ENCODE measurements at regions of chr5 and their contacts with region 1.

Region 1: DNA sequence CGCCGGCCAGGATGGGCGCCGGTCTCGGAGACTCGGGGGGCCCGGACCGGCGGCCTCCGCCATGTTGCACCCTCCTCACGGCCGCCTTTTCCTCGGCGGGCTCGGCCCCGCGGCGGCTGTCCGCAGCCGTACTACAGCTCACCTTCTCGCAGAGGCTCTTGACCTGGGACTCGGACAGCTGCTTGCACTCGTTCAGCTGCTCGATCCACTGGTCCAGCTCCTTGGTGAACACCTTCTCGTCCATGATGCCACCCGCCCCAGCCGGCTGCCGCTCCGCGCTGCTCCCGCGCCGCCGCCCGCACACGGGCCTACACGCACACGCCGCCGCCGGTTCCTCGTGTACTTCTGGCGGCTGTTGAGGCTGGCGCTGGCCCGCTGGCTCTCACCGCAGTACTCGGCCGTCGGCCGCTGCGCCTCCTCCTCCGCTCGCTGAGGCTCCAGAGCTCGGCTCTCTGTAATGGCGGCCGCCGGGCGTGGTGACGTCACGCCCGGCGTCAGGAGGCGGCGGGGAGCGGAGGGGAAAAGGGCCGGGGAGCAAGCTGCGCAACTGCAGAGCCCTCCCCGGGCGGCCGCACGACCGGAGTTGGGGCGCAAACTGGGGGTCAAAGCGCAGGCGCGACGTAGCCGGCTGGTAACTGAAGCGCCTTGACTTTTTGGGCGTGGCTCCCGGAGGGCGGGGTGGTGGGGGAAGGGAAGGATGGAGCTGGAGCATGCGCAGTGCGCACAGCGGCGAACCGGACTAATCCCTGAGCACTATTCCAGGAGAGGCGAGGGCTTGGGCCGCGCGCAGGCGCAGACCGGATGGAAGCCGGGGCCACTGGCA is at the start of gene PPP2CA:
- DNase-seq: peak; percentile 99
- ATAC-seq: peak; percentile 85
- H3K4me3 Mint-ChIP-seq: peak within 1 kb of the TSS; percentile 87
- H3K27ac Mint-ChIP-seq: peak within 1 kb of the TSS; percentile 98
- H3K4me1 Mint-ChIP-seq: peaks cover 43% of the 10 kb centered on the region
- H3K27me3 Mint-ChIP-seq: no peaks in the 10 kb centered on the region
- CTCF ChIP-seq: no peak
- total RNA-seq, gene PPP2CA: 178 to 186 TPM (median 178 TPM) in 3 replicates

Region 2: DNA sequence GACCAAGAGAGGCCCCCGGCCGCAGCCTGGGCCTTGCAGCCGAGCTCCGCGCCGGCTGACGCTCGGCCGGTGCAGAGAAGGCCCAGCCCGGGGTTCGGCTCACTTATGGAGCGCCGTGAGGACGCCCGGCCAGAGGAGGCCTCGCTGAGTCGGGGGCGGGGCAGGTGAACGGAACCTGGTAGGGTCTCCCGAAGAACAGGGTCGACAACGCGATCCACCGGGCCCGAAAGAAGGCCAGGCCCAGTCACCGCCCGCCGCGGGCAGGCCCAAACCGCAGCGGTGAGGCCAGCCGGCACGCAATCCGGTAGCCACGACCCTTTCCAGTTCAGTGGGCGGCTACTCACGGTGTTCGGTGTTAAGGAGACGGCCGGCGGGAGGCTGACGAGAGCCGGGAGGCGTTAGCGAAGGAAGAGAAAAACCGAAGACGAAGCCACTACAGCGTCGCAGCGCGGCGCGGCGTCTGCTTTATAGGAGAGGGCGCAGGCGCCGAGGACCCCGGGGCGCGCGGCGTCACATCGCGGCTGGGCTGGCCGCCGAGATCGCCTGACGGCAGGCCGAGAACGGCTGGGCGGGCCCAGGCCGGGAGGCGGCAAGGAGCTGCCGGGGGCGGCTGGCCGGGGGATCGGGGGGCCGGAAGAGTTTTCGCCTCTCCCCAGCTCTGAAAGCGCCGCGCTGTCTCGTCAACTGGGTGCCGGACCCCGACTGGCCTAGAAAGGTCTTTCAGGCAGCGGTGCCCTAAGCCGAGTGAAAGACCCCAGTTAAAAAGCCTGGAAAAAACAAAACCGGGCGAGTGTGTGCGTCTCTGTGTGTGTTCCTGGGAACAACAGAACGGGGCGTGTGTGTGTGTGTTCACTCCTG is 49.1 kb before region 1 on chr5 and contains the start of gene SKP1:
- CTCF ChIA-PET with region 1: interaction called, 3 read pairs
- POLR2A ChIA-PET with region 1: interaction called, 26 read pairs
- DNase-seq: peak; percentile 78
- ATAC-seq: peak; percentile 80
- H3K4me3 Mint-ChIP-seq: peak within 1 kb of the TSS; percentile 93
- H3K27ac Mint-ChIP-seq: peak within 1 kb of the TSS; percentile 98
- H3K4me1 Mint-ChIP-seq: peaks cover 15% of the 10 kb centered on the region
- H3K27me3 Mint-ChIP-seq: no peaks in the 10 kb centered on the region
- CTCF ChIP-seq: no peak
- total RNA-seq, gene SKP1: 280 to 303 TPM (median 285 TPM) in 3 replicates

Region 3: DNA sequence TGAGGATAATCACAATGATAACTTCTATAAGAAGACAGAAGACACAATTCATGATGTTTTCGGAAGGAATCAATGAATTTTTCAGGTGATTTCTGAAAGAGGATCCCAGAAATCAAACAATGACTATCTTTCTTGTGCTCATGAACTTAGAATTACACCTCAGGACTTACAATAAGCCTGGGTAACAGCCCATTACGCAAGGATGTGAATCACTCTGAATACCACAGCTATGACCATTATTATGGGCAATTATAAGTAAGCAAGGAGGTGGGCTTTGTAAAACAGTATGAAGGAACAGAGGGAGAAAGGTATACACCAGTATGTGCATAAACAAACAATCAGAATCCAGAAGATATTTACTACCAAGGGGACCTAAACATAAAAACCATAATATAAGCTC is 21.6 kb after region 1 on chr5:
- CTCF ChIA-PET with region 1: interaction called, 5 read pairs
- POLR2A ChIA-PET with region 1: interaction called, 10 read pairs
- DNase-seq: no peak
- ATAC-seq: no peak
- H3K4me3 Mint-ChIP-seq: no peak overlapping the region
- H3K27ac Mint-ChIP-seq: no peak overlapping the region
- H3K4me1 Mint-ChIP-seq: peaks cover 32% of the 10 kb centered on the region
- H3K27me3 Mint-ChIP-seq: no peaks in the 10 kb centered on the region; the same call in 1 of the 2 replicates
- CTCF ChIP-seq: no peak

Region 4: GRCh38 chr5:134289509-134290113 is 63.8 kb after region 1 on chr5:
- CTCF ChIA-PET with region 1: interaction called, 27 read pairs
- POLR2A ChIA-PET with region 1: interaction called, 3 read pairs
- DNase-seq: peak; percentile 50
- ATAC-seq: peak; percentile 100
- H3K4me3 Mint-ChIP-seq: no peak overlapping the region
- H3K27ac Mint-ChIP-seq: no peak overlapping the region
- H3K4me1 Mint-ChIP-seq: no peaks in the 10 kb centered on the region
- H3K27me3 Mint-ChIP-seq: peaks cover 19% of the 10 kb centered on the region
- CTCF ChIP-seq: peak; percentile 55

Region 5: GRCh38 chr5:134370871-134371833 is 145.3 kb after region 1 on chr5 and contains the start of gene UBE2B:
- CTCF ChIA-PET with region 1: interaction called, 4 read pairs
- POLR2A ChIA-PET with region 1: interaction called, 17 read pairs
- DNase-seq: peak; percentile 95
- ATAC-seq: peak; percentile 66
- H3K4me3 Mint-ChIP-seq: peak within 1 kb of the TSS; percentile 96
- H3K27ac Mint-ChIP-seq: peak within 1 kb of the TSS; percentile 100
- H3K4me1 Mint-ChIP-seq: peaks cover 31% of the 10 kb centered on the region
- H3K27me3 Mint-ChIP-seq: peaks cover 4% of the 10 kb centered on the region; the same call in 1 of the 2 replicates
- CTCF ChIP-seq: no peak
- total RNA-seq, gene UBE2B: 34.6 to 39.7 TPM (median 39.2 TPM) in 3 replicates

Measured in WTC11 (cell line).